ENCODE measurements at regions of chr10 and their contacts with region 1.

Region 1: GRCh38 chr10:97714048-97714371 is 480 bp downstream of the MARVELD1 start:
- DNase-seq: peak; percentile 59
- H3K4me3 Mint-ChIP-seq: peak overlapping the region; percentile 97
- H3K27ac Mint-ChIP-seq: peak overlapping the region; percentile 92
- H3K4me1 Mint-ChIP-seq: peaks cover 60% of the 10 kb centered on the region
- H3K27me3 Mint-ChIP-seq: no peaks in the 10 kb centered on the region
- CTCF ChIP-seq: no peak

Region 2: DNA sequence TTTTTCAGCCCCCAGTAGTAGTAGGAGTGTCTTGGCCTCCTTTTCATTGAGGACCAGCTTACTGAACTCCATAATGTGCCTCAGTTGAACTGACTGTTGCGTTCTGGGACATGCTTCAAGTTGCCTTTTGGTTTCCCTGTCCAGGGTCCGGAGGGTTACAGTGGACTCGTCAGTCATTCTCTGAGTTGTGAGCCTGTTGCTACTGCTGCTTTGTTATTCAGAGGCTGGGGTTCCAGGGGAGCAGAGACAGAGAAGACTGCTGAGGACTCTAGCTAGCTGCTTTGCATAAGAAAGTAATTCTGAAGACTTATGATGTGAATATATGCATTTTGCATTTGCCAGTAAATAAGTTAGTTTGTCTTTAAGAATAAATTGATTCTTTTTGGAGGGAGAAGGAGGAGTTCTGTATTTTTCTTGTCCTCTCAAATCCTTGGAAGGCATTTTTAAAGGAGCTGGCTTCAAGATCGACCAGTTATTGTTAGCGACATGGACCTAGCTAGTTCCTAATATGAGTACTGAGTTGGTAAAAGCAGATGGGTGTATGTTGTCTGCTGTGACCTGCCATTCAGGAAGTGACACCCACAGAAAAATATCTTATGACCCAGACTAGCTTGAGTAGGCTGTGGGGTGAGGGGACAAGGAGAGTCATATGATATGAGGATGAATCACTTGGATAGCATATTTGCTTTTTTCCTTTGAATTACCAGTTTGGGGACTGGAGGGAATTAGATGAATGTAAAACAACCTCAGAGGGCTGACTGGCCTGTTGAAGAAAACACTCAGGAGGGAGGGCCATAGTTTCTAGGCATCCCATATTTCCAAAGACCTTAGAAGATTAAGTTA is 65.2 kb before region 1 on chr10:
- CTCF ChIA-PET with region 1: no interaction called
- POLR2A ChIA-PET with region 1: interaction called, 13 read pairs
- intact Hi-C with region 1: no loop called
- DNase-seq: peak; percentile 78
- H3K4me3 Mint-ChIP-seq: peak overlapping the region; percentile 11
- H3K27ac Mint-ChIP-seq: peak overlapping the region; percentile 78
- H3K4me1 Mint-ChIP-seq: peaks cover 26% of the 10 kb centered on the region
- H3K27me3 Mint-ChIP-seq: no peaks in the 10 kb centered on the region
- CTCF ChIP-seq: no peak

Region 3: GRCh38 chr10:97664282-97664850 is 49.6 kb before region 1 on chr10:
- CTCF ChIA-PET with region 1: no interaction called
- POLR2A ChIA-PET with region 1: no interaction called
- intact Hi-C with region 1: no loop called
- DNase-seq: no peak
- H3K4me3 Mint-ChIP-seq: no peak overlapping the region
- H3K27ac Mint-ChIP-seq: no peak overlapping the region
- H3K4me1 Mint-ChIP-seq: peaks cover 4% of the 10 kb centered on the region
- H3K27me3 Mint-ChIP-seq: no peaks in the 10 kb centered on the region
- CTCF ChIP-seq: no peak

Region 4: DNA sequence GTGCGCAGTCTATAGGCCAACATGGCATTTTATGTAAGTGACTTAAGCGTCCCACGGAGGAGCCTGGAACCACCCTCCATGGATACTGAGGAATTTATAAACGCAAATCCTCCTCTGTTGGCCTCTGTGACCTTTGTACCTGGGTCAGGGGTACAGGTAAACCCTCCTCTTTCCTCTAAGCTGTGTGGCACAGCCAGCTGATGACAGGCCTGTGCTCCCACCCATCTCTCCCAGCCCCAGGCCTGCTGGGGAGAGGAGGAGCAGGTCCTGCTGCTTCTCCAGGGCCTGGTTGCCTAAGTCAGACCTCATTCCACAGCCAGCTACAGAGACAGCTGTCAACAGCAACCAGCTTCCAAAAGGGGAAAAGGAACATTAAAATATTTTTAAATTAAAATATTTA is 32.0 kb before region 1 on chr10:
- CTCF ChIA-PET with region 1: interaction called, 47 read pairs
- POLR2A ChIA-PET with region 1: interaction called, 915 read pairs
- intact Hi-C with region 1: no loop called
- DNase-seq: no peak
- H3K4me3 Mint-ChIP-seq: peak overlapping the region; percentile 91
- H3K27ac Mint-ChIP-seq: no peak overlapping the region
- H3K4me1 Mint-ChIP-seq: peaks cover 18% of the 10 kb centered on the region
- H3K27me3 Mint-ChIP-seq: no peaks in the 10 kb centered on the region
- CTCF ChIP-seq: no peak

Region 5: DNA sequence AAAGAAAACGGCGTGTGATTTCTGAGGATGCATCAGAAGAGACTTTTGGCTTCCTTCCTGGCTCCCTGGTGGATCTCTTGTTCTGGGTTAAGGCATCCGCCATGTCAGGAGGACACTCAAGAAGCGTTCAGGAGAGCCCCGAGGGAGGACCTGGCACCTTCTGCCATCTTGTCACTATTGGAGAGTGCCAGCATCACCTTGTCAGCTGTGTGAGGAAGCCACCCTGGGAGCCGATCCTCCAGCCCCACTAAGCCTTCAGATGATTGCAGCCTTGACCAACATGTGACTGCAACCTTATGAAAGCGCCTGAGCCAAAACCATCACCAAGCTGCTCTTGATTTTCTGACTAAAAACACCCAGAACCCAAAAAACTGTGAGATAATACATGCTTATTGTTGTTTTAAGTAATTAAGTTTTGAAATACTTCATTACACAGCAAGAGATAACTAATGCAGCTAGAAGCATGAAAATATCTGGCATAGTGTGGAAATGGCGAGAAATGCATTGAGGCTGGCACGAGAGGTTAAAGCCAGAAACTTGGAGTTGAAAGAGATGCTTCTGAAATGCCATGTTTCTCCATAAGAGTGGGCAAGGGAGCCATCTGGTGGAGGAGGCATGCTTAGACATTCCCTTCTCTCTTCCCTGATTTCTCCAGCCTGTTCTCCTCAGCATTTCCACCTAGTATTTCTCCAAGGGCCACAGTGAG is 17.5 kb after region 1 on chr10:
- CTCF ChIA-PET with region 1: interaction called, 847 read pairs
- POLR2A ChIA-PET with region 1: interaction called, 539 read pairs
- intact Hi-C with region 1: loop called (anchors 1 kb)
- DNase-seq: peak; percentile 92
- H3K4me3 Mint-ChIP-seq: no peak overlapping the region
- H3K27ac Mint-ChIP-seq: no peak overlapping the region
- H3K4me1 Mint-ChIP-seq: peaks cover 15% of the 10 kb centered on the region
- H3K27me3 Mint-ChIP-seq: no peaks in the 10 kb centered on the region
- CTCF ChIP-seq: peak; percentile 86

Region 6: DNA sequence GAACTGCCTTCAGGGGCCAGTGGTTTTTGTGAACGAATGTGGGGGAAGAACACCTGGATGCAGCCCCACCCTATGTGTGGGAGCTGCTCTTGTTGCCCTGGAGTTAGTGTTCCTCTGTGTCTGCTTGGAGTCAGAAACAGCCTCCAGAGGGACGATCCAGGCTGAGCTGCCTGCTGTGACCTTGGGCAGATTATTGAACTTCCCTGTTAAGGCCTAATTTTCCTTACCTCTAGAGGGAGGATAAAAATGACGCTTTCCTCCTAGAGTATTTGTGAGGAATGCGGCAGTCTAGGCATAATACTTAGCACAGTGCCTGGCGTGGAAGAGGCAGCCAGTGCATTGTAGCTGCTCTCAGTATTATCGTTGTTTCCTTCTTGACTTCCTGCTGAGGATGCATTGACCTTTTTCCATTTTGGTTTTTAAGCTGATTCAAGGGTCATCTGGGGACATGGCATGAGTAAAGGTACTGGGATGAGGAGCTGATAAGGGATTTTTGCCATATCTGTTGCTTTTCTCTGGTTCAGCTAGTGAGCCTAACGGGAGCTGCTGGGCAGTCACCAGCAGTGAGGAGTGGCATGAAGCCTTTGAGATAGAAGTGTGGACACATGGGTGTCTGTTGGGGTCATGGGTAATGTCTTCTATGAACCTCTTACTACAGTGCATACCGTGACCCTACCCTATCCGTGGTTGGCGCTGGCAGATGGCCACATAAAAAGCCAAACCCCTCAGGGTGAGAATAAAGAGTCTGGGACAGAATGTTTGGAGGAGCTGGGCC is 29.3 kb after region 1 on chr10:
- CTCF ChIA-PET with region 1: interaction called, 13 read pairs
- POLR2A ChIA-PET with region 1: no interaction called
- intact Hi-C with region 1: no loop called
- DNase-seq: no peak
- H3K4me3 Mint-ChIP-seq: no peak overlapping the region
- H3K27ac Mint-ChIP-seq: peak overlapping the region; percentile 3
- H3K4me1 Mint-ChIP-seq: peaks cover 28% of the 10 kb centered on the region
- H3K27me3 Mint-ChIP-seq: no peaks in the 10 kb centered on the region
- CTCF ChIP-seq: no peak

Measured in MCF 10A (cell line).